CD4-positive, alpha-beta T cell (primary cell): ENCODE measurements at regions of chr17 and their contacts with region 1.

Region 1: GRCh38 chr17:45394913-45395568 is 37.6 kb downstream of the ARHGAP27 start:
- DNase-seq: peak in 12 of 14 experiments; percentile 14 to 73 (median 34)
- ATAC-seq: peak; percentile 65
- H3K4me3 ChIP-seq: no peak overlapping the region
- H3K4me3 Mint-ChIP-seq: no peak overlapping the region
- H3K27ac ChIP-seq: no peak overlapping the region
- H3K27ac Mint-ChIP-seq: no peak overlapping the region
- H3K4me1 ChIP-seq: peaks cover 2% of the 10 kb centered on the region
- H3K4me1 Mint-ChIP-seq: peaks cover 7% of the 10 kb centered on the region
- H3K27me3 ChIP-seq: no peaks in the 10 kb centered on the region
- H3K27me3 Mint-ChIP-seq: no peaks in the 10 kb centered on the region
- CTCF ChIP-seq: peak; percentile 71

Region 2: GRCh38 chr17:45380046-45380765 is 14.8 kb before region 1 on chr17:
- CTCF ChIA-PET with region 1: no interaction called
- POLR2A ChIA-PET with region 1: no interaction called
- intact Hi-C with region 1: no loop called
- DNase-seq: no peak
- ATAC-seq: no peak
- H3K4me3 ChIP-seq: no peak overlapping the region
- H3K4me3 Mint-ChIP-seq: no peak overlapping the region
- H3K27ac ChIP-seq: no peak overlapping the region
- H3K27ac Mint-ChIP-seq: no peak overlapping the region
- H3K4me1 ChIP-seq: peaks cover 1% of the 10 kb centered on the region
- H3K4me1 Mint-ChIP-seq: peaks cover under 1% of the 10 kb centered on the region
- H3K27me3 ChIP-seq: no peaks in the 10 kb centered on the region
- H3K27me3 Mint-ChIP-seq: no peaks in the 10 kb centered on the region
- CTCF ChIP-seq: no peak

Region 3: DNA sequence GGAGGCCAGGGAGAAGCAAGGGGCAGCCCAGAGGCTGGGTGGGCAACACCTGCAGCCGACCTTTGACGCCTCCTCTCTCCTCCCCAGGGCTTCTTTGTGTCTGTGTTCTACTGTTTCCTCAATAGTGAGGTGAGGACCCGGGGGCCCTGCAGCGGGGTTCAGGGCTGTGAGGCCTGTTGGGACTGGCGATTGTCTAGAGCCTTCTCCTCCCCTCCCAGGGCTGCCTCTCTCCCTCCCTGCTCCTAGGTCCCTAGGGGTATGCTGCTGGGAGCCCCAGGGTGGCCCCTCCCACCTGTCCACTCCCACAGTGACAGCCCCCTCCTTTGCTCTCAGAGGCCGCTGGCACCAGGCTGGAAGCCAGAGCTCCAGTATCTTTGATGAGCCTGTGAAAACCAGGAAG is 438.9 kb after region 1 on chr17:
- CTCF ChIA-PET with region 1: no interaction called
- POLR2A ChIA-PET with region 1: no interaction called
- intact Hi-C with region 1: loop called in 1 of 2 experiments (anchors 2 kb)
- DNase-seq: no peak
- ATAC-seq: no peak
- H3K4me3 ChIP-seq: no peak overlapping the region
- H3K4me3 Mint-ChIP-seq: no peak overlapping the region
- H3K27ac ChIP-seq: no peak overlapping the region
- H3K27ac Mint-ChIP-seq: no peak overlapping the region
- H3K4me1 ChIP-seq: peaks cover 3% of the 10 kb centered on the region
- H3K4me1 Mint-ChIP-seq: no peaks in the 10 kb centered on the region
- H3K27me3 ChIP-seq: no peaks in the 10 kb centered on the region
- H3K27me3 Mint-ChIP-seq: peaks cover 1% of the 10 kb centered on the region
- CTCF ChIP-seq: no peak